ENCODE measurements at regions of chr2 and their contacts with region 1.

Region 1: DNA sequence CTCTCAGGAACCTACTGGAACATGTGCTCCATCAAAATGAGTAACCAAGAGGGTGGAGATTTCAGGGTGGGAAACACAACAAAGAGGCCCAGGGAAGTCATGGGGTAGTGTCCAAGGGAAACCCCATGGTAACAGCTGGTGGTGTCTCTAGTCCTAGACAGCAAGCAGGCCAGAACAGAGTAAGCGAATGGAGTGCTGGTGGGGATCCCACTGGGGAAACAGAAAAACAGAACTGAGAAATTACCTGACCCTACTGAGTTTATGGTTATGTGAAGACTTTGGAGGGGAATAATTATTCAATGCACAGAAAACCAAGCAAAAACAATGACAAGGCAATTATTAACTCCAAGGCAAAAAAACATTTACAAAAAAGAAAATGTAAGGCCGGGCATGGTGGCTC is 16.9 kb downstream of the ERCC3 start:
- DNase-seq: no peak

Region 2: DNA sequence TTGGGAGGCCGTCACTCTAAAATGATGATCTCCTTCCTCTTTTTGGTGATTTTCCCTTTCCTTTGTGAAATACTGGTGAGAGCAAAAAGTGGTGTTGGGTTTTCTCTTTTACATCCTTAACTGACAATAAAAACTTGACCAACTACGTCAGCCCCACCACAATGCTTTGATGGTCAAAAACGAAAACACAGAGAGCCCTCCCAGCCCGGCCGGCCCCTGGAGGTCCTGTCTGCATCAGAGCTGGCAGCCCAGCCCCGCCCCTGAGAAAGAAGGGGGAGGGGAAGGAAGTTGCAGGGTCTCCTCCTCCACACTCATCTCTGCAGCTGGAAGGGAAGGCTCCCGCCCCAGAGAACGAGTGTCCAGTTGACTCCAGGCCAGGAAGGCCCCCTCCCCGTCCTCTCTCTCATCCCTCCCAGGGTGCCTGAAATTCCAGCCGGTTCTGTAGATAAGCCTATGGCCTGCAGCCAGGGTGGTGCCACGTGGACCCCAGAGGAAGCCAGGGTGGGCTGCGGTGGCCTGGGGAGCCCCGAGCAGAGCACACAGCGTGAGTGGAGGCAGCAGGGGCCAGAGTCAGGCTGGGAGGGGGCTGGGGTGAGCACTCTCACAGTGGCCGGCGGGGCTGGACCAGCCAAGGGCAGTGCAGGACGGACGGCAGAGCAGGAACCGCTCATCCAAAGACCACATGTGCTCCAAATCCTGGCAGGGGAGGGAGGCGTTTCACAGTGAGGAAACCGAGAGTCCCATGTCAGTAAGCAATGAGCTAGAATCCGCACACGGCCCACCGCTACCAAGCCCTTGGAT is 189.8 kb before region 1 on chr2:
- intact Hi-C with region 1: loop called (anchors 5 kb)
- DNase-seq: peak in 1 of 10 donors; percentile 85

Region 3: DNA sequence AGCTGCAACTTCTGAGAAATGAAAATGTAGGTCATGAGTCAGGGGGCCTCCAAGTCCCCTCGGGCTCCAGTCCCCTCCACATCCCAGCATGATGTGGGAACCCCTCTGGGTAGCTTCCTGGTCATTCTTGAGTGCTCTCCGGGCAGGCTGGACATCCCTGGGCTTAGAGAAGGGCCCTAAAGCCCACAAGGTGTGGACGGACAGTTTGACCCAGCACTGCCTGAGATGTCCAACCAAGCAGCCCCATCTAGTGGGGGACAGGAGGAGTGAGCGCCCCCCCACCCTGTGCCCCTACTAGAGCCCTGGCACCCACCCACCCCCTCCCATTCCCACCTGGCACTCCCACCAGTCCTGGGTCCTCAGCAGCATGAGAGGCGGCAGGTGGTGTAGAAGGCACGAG is 102.9 kb before region 1 on chr2:
- intact Hi-C with region 1: loop called (anchors 10 kb)
- DNase-seq: peak in 5 of 10 donors; percentile 32 to 55 (median 51)

Measured in posterior cingulate gyrus (tissue), 11 donors.